Activated CD4-positive, alpha-beta memory T cell treated with anti-CD3 and anti-CD28 coated beads for 36 hours (primary cell): ENCODE measurements at regions of chr13 and their contacts with region 1.

Region 1: DNA sequence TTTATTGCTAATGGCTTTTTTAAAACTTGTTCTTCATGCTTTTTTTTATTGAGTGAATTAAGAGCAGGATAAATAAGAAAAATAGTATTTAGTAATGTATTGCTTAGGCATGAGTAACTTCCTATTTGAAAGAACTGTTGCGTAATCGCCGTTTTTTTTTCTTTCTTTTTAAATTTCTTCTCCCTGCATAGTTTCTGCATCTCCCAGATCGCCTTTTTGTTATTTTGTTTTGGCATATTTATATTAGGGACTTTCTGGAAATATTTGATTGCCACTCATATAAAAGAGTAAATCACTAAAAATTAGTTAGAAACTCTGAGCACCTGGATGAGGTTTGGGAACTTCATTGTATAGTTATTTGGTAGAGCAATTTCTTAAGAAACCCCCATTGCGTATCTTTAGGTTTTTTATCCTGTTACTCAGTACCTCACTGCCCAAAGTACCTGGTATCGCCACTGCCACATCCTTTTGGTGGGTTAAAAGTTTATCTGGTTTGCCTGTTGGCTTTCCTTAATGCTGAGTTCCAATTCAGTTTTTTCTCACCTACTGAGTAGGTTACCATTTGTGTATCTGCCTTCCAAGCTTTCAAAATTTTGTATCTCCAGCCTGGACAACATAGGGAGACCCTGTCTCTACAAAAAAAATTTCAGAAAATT is 36.2 kb upstream of the LPAR6 start:
- DNase-seq: no peak
- H3K4me3 Mint-ChIP-seq: no peak overlapping the region
- H3K27ac Mint-ChIP-seq: no peak overlapping the region
- H3K4me1 Mint-ChIP-seq: peaks cover 37% of the 10 kb centered on the region
- H3K27me3 Mint-ChIP-seq: no peaks in the 10 kb centered on the region

Region 2: DNA sequence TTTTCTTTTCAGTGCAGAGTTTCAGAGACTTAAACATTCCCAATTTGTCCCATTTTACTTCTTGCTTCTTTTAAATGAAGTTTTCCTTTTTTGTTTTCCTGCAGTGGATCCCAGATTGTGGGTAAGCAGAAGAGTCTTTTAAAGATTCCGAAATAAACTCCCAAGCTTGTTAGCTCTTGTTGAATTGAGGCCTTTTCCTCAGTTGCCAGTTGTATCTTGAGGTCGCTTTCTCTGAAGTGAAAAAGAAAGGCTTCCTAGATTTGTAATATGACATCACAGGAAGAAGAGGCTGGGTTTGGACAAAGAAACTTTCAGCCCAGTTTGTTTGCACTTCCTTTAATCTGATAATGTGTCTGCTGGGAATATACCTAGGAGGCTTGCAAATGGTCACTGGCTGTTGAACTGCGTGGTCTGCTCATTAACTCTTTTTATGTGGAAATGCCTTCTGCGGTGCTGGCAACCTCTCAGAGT is 36.2 kb before region 1 on chr13 and contains the start of gene LPAR6:
- CTCF ChIA-PET with region 1: no interaction called
- POLR2A ChIA-PET with region 1: no interaction called
- intact Hi-C with region 1: loop called (anchors 5 kb)
- DNase-seq: peak; percentile 23
- H3K4me3 Mint-ChIP-seq: peak within 1 kb of the TSS; percentile 94
- H3K27ac Mint-ChIP-seq: peak within 1 kb of the TSS; percentile 97
- H3K4me1 Mint-ChIP-seq: peaks cover 41% of the 10 kb centered on the region
- H3K27me3 Mint-ChIP-seq: no peaks in the 10 kb centered on the region
- total RNA-seq, gene LPAR6: 8.8 TPM

Region 3: DNA sequence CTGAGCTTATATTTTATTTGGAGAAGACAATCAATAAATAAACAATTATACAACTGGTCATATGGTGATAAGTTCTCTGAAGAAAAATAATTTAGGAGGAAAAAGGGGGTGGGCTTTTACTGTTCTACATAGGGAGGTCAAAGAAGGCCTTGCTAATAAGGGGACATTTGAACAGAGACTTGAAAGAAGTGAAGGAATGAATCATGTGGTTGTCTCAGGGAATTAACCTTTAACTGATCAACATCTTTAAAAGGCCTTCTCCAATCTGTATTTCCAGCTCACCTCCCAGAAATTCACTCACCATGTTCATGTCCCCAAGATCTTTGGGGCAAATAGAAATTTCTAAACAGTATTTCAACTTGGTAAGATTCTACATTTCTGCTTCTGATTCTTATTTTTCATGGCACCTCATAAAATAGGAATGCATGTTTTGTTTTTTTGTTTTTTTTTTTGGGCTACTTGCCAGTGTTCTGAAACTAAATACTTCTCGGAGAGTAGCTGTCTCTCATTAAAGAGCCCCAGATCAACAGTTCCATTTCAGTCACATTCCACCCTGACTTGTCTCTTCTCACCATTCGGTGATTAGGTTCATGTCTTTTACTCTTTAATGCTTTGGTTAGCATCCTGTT is 17.0 kb before region 1 on chr13:
- CTCF ChIA-PET with region 1: no interaction called
- POLR2A ChIA-PET with region 1: no interaction called
- intact Hi-C with region 1: loop called (anchors 2 kb)
- DNase-seq: no peak
- H3K4me3 Mint-ChIP-seq: peak overlapping the region; percentile 20
- H3K27ac Mint-ChIP-seq: peak overlapping the region; percentile 45
- H3K4me1 Mint-ChIP-seq: peaks cover 57% of the 10 kb centered on the region
- H3K27me3 Mint-ChIP-seq: no peaks in the 10 kb centered on the region